ENCODE measurements at regions of chr13 and their contacts with region 1.

Region 1: GRCh38 chr13:101144808-101145419 is 271.4 kb downstream of the NALCN start:
- DNase-seq: peak in 1 of 7 donors; percentile 28
- H3K4me3 ChIP-seq: no peak overlapping the region
- H3K27ac ChIP-seq: no peak overlapping the region
- H3K4me1 ChIP-seq: no peaks in the 10 kb centered on the region
- H3K27me3 ChIP-seq: no peaks in the 10 kb centered on the region
- CTCF ChIP-seq: peak; percentile 56 to 80 (median 70)
- POLR2A ChIP-seq: no peak

Region 2: GRCh38 chr13:101452519-101453485 is 307.9 kb after region 1 on chr13 and contains the start of gene ITGBL1:
- intact Hi-C with region 1: loop called in 1 of 2 experiments (anchors 10 kb)
- DNase-seq: peak in 1 of 7 donors; percentile 15
- H3K4me3 ChIP-seq: peak within 1 kb of the TSS in 2 of 4 donors; percentile 10 to 54
- H3K27ac ChIP-seq: peak within 1 kb of the TSS in 2 of 5 donors; percentile 12 to 33
- H3K4me1 ChIP-seq: peaks cover 6 to 12% of the 10 kb centered on the region in 2 donors
- H3K27me3 ChIP-seq: no peaks in the 10 kb centered on the region
- CTCF ChIP-seq: no peak
- POLR2A ChIP-seq: no peak
- total RNA-seq, gene ITGBL1: 1.4 to 7.9 (median 4.3) TPM

Region 3: GRCh38 chr13:101757446-101758039 is 612.6 kb after region 1 on chr13:
- intact Hi-C with region 1: loop called in 1 of 2 experiments (anchors 10 kb)
- DNase-seq: no peak
- H3K4me3 ChIP-seq: no peak overlapping the region
- H3K27ac ChIP-seq: no peak overlapping the region
- H3K4me1 ChIP-seq: no peaks in the 10 kb centered on the region
- H3K27me3 ChIP-seq: peaks cover 3% of the 10 kb centered on the region
- CTCF ChIP-seq: peak; percentile 23 to 57 (median 46)
- POLR2A ChIP-seq: no peak

Region 4: DNA sequence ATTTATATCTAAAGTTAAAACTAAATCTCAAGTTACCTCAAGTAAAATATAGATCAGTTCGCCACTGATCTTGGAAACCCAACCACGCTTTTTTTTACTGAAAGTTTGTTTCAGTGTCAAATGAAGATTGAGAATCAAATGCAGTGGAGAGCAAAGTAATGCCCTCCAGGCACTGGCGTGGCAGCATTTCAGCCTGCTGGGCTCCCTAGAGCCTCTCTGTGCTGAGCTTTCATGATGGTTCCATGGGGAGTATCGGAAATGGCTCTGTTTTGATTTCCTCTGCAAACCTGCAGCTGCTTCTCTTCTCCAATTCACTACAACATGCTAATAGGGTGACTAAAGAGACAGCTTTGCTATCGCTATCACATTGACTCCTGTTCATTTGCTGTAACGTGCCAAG is 1115.3 kb after region 1 on chr13:
- intact Hi-C with region 1: no loop called
- DNase-seq: no peak
- H3K4me3 ChIP-seq: no peak overlapping the region
- H3K27ac ChIP-seq: no peak overlapping the region
- H3K4me1 ChIP-seq: no peaks in the 10 kb centered on the region
- H3K27me3 ChIP-seq: no peaks in the 10 kb centered on the region
- CTCF ChIP-seq: no peak
- POLR2A ChIP-seq: no peak

Measured in adrenal gland (tissue), 19 donors.